ENCODE measurements at regions of chr19 and their contacts with region 1.

Region 1: DNA sequence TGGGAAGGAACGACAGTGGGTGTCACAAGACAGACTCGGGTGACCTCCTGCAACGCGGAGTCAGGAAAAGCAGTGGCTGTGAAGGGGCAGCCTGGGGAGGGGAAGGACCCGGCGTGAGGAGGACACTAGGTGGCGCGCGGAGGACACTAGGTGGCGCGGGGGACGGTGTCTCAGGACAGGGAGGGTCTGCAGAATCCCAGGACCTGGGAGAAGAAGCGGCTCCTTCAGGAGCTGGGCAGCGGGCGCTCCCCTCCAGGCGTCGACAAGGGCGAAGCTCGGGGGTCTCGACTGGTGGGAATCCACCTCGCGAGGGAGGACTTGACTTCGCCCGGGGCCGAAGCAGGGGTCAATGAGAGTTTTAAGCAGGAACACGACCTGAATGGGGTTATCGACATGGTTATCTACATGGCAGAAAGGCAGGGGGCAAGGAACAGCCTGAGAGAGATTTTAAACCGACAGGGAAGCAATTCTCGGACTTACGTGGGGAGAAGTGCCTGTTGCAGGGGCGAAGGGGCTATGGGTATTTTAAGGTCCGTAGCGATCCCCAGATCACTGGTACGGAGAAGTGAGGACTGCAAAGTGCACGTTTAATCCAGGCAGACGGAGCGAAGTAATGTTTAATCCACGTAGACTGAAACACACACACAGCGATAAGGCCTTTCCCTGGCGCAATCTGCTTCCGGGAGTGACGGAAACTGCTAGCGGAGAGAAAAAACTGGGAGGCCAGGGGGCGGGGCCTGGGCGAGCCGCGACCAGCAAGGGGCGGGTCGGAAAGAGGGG is at the start of gene ZNF616:
- DNase-seq: peak; percentile 87 to 99 (median 97)

Region 2: GRCh38 chr19:51971624-51972023 is 167.8 kb before region 1 on chr19:
- intact Hi-C with region 1: no loop called
- DNase-seq: no peak

Region 3: DNA sequence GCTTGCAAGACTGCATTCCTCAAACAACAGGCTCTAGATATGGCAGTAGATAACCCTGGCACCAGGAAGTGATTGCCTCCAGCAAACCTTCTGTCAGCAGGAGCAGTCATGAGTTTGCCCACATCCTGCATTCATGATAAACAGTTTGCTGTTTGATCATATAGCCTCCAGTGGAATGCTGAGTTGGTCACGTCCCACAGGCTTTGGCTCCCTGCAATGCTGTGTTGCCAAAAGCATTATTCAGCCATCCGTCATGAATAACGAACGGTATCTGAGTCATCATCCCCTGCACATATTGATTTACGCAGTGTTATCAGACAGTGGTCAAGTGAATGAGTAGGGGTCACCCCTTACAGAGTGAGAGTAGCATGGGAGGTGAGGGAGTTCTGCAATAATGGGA is 69.0 kb before region 1 on chr19:
- intact Hi-C with region 1: no loop called
- DNase-seq: no peak

Region 4: DNA sequence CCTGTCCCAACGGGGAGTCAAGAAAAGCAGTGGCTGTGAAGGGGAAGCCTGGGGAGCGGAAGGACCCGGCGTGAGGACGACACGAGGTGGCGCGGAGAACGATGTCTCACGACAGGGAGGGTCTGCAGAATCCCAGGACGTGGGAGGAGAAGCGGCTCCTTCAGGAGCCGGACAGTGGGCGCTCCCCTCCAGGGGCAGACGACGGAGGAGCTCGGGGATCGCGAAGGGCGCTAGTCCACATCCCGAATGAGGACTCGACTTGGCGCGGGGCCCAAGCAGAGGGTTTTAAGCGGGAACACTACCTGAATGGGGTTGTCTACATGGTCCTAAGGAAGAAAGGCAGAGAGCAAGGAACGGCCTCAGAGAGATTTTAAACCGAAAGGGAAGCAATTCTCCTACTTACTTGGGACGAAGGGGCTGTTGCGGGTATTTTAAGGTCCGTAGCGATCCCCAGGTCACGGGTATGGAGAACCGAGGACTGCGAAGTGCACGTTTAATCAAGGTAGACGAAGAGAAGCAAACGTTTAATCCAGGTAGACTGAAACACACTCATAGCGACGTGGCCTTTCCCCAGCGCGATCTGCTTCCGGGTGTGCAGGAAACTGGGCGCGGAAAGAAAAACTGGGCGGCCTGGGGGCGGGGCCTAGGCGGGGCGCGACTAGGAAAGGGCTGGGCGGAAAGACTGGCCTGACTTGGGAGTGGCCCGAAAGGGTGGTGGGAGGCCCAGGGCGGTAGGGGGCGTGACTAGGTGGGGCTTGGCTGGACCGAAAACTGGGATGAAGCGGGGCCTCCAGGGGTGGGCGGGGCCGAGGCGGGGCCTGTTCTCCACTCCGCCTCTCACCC is 44.0 kb before region 1 on chr19 and contains the start of gene ZNF841:
- intact Hi-C with region 1: loop called (anchors 5 kb)
- DNase-seq: peak; percentile 86 to 99 (median 93)

Region 5: GRCh38 chr19:52189735-52190486 is 50.5 kb after region 1 on chr19 and contains the start of gene PPP2R1A:
- intact Hi-C with region 1: loop called (anchors 2 kb)
- DNase-seq: peak; percentile 98 to 100 (median 99)

Region 6: GRCh38 chr19:52237771-52238400 is 98.4 kb after region 1 on chr19:
- intact Hi-C with region 1: loop called (anchors 1 kb)
- DNase-seq: peak in 9 of 10 donors; percentile 17 to 91 (median 60)